Psoas muscle (tissue), 8 donors: ENCODE measurements at regions of chr3 and their contacts with region 1.

Region 1: DNA sequence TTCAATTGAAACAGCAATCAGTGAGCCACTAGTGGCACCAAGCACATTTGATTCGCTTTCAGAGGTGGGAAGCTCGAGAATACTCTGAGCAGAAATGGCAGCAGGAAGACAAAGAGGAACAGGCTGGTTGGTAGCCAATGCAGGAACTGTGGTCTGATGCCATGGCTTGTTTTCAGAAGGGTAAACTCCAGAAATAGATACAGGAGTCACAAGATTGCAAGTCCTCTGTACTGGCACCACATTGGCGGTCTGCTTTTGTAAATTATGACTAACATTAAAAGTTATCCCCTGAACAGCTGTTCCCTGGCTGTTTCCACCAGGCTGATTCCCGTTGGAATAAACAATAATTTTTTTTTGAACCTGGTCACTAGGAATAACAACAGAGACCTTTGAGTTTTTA is 35.5 kb downstream of the USF3 start:
- DNase-seq: peak; percentile 23 to 62
- ATAC-seq: peak; percentile 94 to 96 (median 96)
- H3K4me3 ChIP-seq: peak overlapping the region; percentile 38
- H3K27ac ChIP-seq: peak overlapping the region; percentile 85
- H3K4me1 ChIP-seq: peaks cover 39% of the 10 kb centered on the region
- H3K27me3 ChIP-seq: no peaks in the 10 kb centered on the region
- CTCF ChIP-seq: no peak

Region 2: DNA sequence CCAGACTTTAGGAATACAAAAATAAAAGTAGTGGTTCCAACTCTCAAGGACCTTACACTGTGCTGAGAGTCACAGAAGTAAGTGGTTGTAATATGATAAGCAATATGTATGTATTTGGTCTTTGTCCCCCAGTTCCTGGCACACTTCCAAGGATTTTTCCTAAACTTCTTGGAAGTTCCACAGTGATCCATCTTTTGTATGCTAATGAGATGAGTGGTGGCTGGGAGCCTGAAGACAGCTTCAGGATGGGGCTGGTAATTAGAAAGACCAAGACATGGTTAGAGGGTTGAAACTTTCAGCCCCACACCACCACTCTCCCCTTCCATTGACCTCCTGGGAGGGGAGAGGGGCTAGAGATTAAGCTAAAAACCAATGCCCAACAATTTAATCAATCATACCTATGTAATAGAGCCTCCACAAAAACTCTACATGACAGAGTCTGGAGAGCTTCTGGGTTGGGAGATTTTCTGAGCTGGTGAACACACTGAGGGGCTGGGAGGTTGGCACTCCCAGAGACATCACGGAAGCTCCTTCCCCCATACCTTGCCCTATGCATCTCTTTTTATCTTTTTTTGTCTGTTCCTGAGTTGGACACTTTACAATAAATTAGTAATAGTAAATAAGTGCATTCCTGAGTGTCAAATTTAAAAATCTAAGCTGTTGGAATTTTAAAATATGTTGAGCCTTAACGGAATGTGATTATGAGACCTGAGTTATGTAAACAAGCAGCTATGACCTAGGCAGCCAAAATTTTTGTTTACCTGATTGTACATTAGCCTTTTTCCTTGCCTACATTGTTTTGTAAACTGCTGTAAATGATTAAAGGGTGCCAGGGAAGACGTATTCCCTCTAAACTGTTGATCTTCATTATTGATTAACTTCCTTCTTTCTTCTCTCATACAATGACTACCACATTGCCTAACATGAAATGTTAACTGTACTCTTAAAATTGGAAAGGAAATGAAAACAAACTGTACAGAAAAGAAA is 838.5 kb before region 1 on chr3:
- intact Hi-C with region 1: no loop called
- DNase-seq: no peak
- ATAC-seq: no peak
- H3K4me3 ChIP-seq: no peak overlapping the region
- H3K27ac ChIP-seq: no peak overlapping the region
- H3K4me1 ChIP-seq: no peaks in the 10 kb centered on the region
- H3K27me3 ChIP-seq: no peaks in the 10 kb centered on the region
- CTCF ChIP-seq: no peak

Region 3: GRCh38 chr3:113696658-113697499 is 36.0 kb after region 1 on chr3:
- intact Hi-C with region 1: loop called in 1 of 2 experiments (anchors 2 kb)
- DNase-seq: peak; percentile 99
- ATAC-seq: peak; percentile 91 to 97 (median 96)
- H3K4me3 ChIP-seq: peak overlapping the region; percentile 81
- H3K27ac ChIP-seq: peak overlapping the region; percentile 99
- H3K4me1 ChIP-seq: peaks cover 43% of the 10 kb centered on the region
- H3K27me3 ChIP-seq: no peaks in the 10 kb centered on the region
- CTCF ChIP-seq: no peak

Region 4: DNA sequence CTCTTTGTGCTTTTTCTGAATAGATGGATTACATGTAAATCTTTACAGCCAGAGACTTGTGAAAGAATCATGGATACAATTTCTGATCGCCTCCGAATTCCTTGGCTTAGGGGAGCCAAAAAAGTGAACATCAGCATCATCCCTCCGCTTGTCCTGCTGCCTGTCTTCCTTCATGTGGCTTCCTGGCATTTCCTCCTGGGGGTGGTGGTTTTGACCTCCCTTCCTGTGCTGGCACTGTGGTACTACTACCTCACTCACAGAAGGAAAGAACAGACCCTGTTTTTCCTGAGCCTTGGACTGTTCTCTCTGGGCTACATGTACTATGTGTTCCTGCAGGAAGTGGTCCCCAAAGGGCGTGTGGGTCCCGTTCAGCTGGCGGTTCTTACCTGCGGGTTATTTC is 292.8 kb after region 1 on chr3:
- intact Hi-C with region 1: no loop called
- DNase-seq: no peak
- ATAC-seq: peak in 1 of 4 donors; percentile 19
- H3K4me3 ChIP-seq: no peak overlapping the region
- H3K27ac ChIP-seq: no peak overlapping the region
- H3K4me1 ChIP-seq: peaks cover 1% of the 10 kb centered on the region
- H3K27me3 ChIP-seq: no peaks in the 10 kb centered on the region
- CTCF ChIP-seq: no peak

Region 5: DNA sequence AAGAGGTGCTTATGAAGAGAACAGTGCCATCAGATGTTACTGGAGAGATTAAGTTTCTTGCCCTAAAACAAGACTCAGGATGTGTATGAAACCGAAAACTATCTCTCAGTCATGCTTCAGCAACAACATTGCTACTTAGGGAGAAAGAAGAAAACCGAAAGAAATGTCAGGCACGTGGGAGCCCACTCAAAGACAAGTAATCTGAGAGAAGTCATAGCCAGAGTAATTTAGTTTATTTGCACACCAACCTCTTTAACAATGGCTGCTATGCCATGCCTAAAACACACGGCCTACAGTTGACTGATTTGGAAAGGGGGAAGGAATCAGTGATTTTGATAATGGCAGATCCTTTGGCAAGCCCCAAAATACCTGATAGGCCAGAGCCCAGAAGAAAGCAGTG is 795.8 kb after region 1 on chr3:
- intact Hi-C with region 1: no loop called
- DNase-seq: no peak
- ATAC-seq: no peak
- H3K4me3 ChIP-seq: no peak overlapping the region
- H3K27ac ChIP-seq: peak overlapping the region; percentile 19
- H3K4me1 ChIP-seq: peaks cover 69% of the 10 kb centered on the region
- H3K27me3 ChIP-seq: no peaks in the 10 kb centered on the region
- CTCF ChIP-seq: no peak